ENCODE measurements at regions of chr20 and their contacts with region 1.

Region 1: DNA sequence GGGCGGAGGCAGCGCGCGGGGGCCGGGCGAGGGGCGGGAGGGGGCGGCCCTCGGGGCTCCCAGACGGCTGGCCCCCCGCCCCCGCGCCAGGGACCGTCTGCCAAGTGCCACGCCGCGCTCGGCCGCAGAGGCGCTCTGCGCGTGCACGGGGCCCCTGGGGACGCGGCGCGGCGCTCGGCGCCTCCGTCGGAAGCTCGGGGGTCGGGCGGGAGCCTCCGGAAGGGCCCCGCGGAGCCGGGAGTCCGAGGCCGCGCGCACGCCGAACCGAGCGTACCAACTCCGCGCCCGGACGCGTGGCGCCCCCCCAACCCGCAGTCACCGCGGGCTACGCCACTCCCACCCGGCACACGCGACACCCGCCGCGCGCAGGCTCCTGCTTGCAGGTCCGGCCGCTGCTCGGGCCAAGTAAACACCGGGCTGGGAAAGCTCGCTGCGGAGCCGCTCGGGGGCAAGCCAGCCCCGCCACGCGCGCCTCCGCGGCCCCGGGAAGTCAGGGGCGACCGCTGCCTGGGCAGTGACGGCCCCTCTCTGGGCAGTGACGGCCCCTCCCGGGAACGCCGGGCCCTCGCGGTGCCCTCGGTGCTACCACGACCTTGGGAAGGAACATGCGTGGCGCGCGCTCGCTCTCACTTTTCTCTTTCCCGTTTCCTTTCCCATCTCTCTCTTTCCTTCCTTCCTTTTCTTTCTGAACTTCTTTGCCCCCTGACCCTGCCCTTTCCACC is 384 bp upstream of the PREX1 start:
- DNase-seq: peak; percentile 93
- ATAC-seq: peak; percentile 65
- H3K4me3 Mint-ChIP-seq: peak overlapping the region; percentile 88
- H3K27ac Mint-ChIP-seq: peak overlapping the region; percentile 85
- H3K4me1 Mint-ChIP-seq: peaks cover 42% of the 10 kb centered on the region
- H3K27me3 Mint-ChIP-seq: no peaks in the 10 kb centered on the region
- CTCF ChIP-seq: no peak

Region 2: DNA sequence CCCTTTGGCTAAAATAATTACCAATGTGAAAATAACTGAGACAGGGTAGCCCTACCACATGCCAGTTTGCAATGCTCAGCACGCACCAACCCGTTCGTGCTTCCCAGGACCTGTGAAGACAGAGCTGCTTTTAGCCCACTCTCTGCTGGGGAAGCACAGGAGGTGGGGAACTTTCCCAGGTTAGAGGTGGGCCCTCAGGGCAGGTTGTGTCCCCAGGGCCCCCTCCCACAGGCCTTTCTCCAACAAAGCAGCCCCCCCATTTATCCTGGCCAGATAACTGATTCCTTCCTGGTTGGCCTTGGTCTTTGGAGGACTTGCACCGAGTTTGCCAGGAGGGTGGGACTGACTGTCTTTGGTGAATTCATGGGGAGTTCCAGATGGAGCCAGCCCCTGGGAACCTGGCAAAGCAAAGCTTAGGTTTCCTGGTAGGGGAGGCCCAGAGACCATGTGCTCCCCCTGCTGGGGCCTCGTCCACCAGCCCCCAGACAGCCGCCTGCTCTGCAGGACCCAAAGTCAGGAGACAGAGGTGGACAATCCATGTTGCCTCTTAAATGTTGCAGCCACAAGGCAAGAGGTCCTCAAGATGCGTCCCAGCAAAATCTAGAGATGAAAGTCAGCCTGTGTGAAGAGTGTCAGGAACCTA is 498.4 kb before region 1 on chr20:
- CTCF ChIA-PET with region 1: no interaction called
- POLR2A ChIA-PET with region 1: no interaction called
- intact Hi-C with region 1: no loop called
- DNase-seq: no peak
- ATAC-seq: no peak
- H3K4me3 Mint-ChIP-seq: no peak overlapping the region
- H3K27ac Mint-ChIP-seq: no peak overlapping the region
- H3K4me1 Mint-ChIP-seq: no peaks in the 10 kb centered on the region
- H3K27me3 Mint-ChIP-seq: peaks cover 15% of the 10 kb centered on the region
- CTCF ChIP-seq: no peak

Region 3: GRCh38 chr20:48489656-48490055 is 338.5 kb before region 1 on chr20:
- CTCF ChIA-PET with region 1: no interaction called
- POLR2A ChIA-PET with region 1: no interaction called
- intact Hi-C with region 1: no loop called
- DNase-seq: no peak
- ATAC-seq: no peak
- H3K4me3 Mint-ChIP-seq: no peak overlapping the region
- H3K27ac Mint-ChIP-seq: peak overlapping the region; percentile 43
- H3K4me1 Mint-ChIP-seq: peaks cover 30% of the 10 kb centered on the region
- H3K27me3 Mint-ChIP-seq: peaks cover 14% of the 10 kb centered on the region
- CTCF ChIP-seq: no peak

Region 4: DNA sequence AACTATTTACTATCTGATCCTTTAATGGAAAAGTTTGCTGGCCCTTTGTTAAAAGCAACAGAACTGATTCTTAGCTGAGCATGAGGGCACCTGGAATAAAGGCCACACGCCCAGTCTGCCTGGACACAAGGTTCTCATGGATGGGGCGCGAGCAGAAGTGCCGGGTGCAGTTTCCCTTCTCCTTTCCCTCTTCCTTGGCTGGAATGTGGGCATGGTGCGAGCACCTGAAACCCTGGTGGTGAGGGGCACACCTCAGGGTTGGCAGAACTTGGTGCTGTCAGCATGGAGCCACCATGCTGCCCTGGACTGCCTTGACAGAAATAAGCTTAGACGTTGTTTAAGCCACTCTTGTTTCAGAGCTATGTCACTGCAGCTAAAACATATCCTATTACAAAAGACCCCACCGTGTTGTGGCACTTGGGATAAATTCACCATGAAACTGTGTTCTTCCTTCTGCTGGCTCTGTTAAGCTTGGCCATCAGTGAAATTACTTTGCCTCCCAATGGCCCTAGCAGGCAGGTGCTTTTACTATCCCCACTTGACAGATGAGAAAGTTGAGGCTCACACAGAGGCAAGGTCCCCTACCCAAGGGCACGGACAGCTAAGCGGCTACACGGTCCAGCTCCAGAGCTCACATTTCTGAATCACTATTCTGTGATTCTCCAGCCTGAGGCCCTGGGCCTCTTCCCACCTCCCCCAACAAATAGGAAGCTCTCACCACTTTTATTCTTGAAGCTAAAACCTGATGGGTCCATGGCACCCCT is 116.3 kb before region 1 on chr20:
- CTCF ChIA-PET with region 1: no interaction called
- POLR2A ChIA-PET with region 1: interaction called, 12 read pairs
- intact Hi-C with region 1: no loop called
- DNase-seq: no peak
- ATAC-seq: peak; percentile 23
- H3K4me3 Mint-ChIP-seq: peak overlapping the region; percentile 74
- H3K27ac Mint-ChIP-seq: peak overlapping the region; percentile 87
- H3K4me1 Mint-ChIP-seq: peaks cover 83% of the 10 kb centered on the region
- H3K27me3 Mint-ChIP-seq: no peaks in the 10 kb centered on the region
- CTCF ChIP-seq: no peak

Region 5: GRCh38 chr20:48760403-48760983 is 67.7 kb before region 1 on chr20:
- CTCF ChIA-PET with region 1: no interaction called
- POLR2A ChIA-PET with region 1: interaction called, 4 read pairs
- intact Hi-C with region 1: loop called (anchors 2 kb)
- DNase-seq: no peak
- ATAC-seq: peak; percentile 73
- H3K4me3 Mint-ChIP-seq: peak overlapping the region; percentile 75
- H3K27ac Mint-ChIP-seq: peak overlapping the region; percentile 95
- H3K4me1 Mint-ChIP-seq: peaks cover 91% of the 10 kb centered on the region
- H3K27me3 Mint-ChIP-seq: no peaks in the 10 kb centered on the region
- CTCF ChIP-seq: no peak

Region 6: GRCh38 chr20:48803176-48803575 is 25.0 kb before region 1 on chr20:
- CTCF ChIA-PET with region 1: no interaction called
- POLR2A ChIA-PET with region 1: interaction called, 3 read pairs
- intact Hi-C with region 1: loop called (anchors 2 kb)
- DNase-seq: no peak
- ATAC-seq: no peak
- H3K4me3 Mint-ChIP-seq: no peak overlapping the region
- H3K27ac Mint-ChIP-seq: peak overlapping the region; percentile 50
- H3K4me1 Mint-ChIP-seq: peaks cover 79% of the 10 kb centered on the region
- H3K27me3 Mint-ChIP-seq: no peaks in the 10 kb centered on the region
- CTCF ChIP-seq: no peak

Region 7: GRCh38 chr20:48864791-48865314 is 36.7 kb after region 1 on chr20:
- CTCF ChIA-PET with region 1: interaction called, 3 read pairs
- POLR2A ChIA-PET with region 1: interaction called, 7 read pairs
- intact Hi-C with region 1: loop called (anchors 5 kb)
- DNase-seq: no peak
- ATAC-seq: peak; percentile 14
- H3K4me3 Mint-ChIP-seq: peak overlapping the region; percentile 9
- H3K27ac Mint-ChIP-seq: no peak overlapping the region
- H3K4me1 Mint-ChIP-seq: peaks cover 45% of the 10 kb centered on the region
- H3K27me3 Mint-ChIP-seq: no peaks in the 10 kb centered on the region
- CTCF ChIP-seq: no peak

Region 8: DNA sequence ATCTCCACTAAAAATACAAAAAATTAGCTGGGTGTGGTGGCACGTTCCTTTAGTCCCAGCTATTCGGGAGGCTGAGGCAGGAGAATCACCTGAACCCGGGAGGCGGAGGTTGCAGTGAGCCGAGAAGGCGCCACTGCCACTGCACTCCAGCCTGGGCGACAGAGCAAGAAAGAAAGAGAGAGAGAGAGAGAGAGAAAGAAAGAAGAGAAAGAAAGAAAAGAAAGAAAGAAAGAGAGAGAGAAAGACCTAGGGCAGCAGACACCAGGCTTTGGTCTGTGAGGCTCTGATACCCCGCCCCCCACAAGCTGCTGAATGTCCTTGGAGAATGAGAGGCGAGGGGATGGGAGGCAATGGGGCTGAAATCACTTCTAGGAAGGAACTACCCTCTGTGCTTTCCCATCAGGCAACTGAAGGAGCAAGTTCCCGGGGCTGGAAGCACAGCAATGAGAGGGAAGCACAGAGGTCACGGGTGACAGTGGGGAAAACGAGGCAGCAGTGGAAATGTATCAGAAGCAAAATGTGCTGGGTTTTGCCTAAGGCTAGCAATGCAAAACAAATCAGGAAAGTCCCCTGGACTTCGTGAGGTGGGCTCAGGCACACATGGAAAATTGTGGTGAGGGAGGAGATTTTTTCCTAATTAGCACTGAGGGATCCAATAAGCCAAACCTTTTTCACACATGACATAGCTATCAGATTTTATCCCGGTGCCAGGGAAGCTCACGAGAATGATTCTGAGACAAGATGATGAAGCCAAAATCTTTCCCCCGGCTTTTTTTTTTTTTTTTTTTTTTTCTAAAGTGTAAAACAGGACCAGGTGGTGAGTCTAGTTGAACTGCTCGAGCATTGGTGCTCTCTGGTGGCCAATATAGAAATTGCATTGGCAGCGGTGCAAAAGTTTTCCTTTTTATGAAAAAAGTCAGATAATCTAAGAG is 76.4 kb after region 1 on chr20:
- CTCF ChIA-PET with region 1: interaction called, 7 read pairs
- POLR2A ChIA-PET with region 1: interaction called, 20 read pairs
- intact Hi-C with region 1: loop called (anchors 2 kb)
- DNase-seq: no peak
- ATAC-seq: peak; percentile 83
- H3K4me3 Mint-ChIP-seq: peak overlapping the region; percentile 45
- H3K27ac Mint-ChIP-seq: peak overlapping the region; percentile 30
- H3K4me1 Mint-ChIP-seq: peaks cover 10% of the 10 kb centered on the region
- H3K27me3 Mint-ChIP-seq: no peaks in the 10 kb centered on the region
- CTCF ChIP-seq: no peak